Activated CD4-positive, alpha-beta T cell treated with anti-CD3 and anti-CD28 coated beads for 36 hours (primary cell): ENCODE measurements at regions of chr1 and their contacts with region 1.

Region 1: GRCh38 chr1:84156210-84156621 is 12.1 kb downstream of the PRKACB start:
- DNase-seq: peak; percentile 7
- ATAC-seq: peak; percentile 49
- H3K4me3 Mint-ChIP-seq: peak overlapping the region; percentile 38
- H3K27ac Mint-ChIP-seq: peak overlapping the region; percentile 65
- H3K4me1 Mint-ChIP-seq: peaks cover 87% of the 10 kb centered on the region
- H3K27me3 Mint-ChIP-seq: no peaks in the 10 kb centered on the region

Region 2: GRCh38 chr1:84090447-84091245 is 65.6 kb before region 1 on chr1:
- CTCF ChIA-PET with region 1: no interaction called
- POLR2A ChIA-PET with region 1: no interaction called
- intact Hi-C with region 1: loop called in 1 of 2 experiments (anchors 5 kb)
- DNase-seq: peak; percentile 10
- ATAC-seq: peak; percentile 52
- H3K4me3 Mint-ChIP-seq: peak overlapping the region; percentile 50
- H3K27ac Mint-ChIP-seq: peak overlapping the region; percentile 75
- H3K4me1 Mint-ChIP-seq: peaks cover 32% of the 10 kb centered on the region
- H3K27me3 Mint-ChIP-seq: no peaks in the 10 kb centered on the region

Region 3: DNA sequence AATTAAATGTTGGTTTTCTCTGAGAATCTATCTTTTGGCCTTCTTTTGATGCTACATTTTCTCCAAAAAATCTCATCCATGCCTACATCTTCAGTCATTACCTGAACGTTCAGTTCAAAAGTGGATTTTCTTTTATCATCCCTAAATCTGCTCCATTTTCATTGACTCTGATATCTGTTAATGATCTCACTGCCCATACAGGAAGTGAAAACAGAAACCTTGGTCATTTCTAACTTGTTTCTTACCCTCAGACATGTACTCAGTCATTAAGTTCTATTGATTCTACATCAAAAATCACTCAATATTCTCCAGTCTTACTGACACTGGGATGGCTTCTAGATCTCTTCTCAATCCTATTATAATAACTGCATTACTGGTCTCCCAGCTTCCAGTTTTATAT is 10.6 kb after region 1 on chr1:
- CTCF ChIA-PET with region 1: interaction called, 8 read pairs
- POLR2A ChIA-PET with region 1: interaction called, 3 read pairs
- intact Hi-C with region 1: loop called (anchors 1 to 2 kb)
- DNase-seq: no peak
- ATAC-seq: peak; percentile 71
- H3K4me3 Mint-ChIP-seq: peak overlapping the region; percentile 4
- H3K27ac Mint-ChIP-seq: peak overlapping the region; percentile 52
- H3K4me1 Mint-ChIP-seq: peaks cover 83% of the 10 kb centered on the region
- H3K27me3 Mint-ChIP-seq: no peaks in the 10 kb centered on the region

Region 4: DNA sequence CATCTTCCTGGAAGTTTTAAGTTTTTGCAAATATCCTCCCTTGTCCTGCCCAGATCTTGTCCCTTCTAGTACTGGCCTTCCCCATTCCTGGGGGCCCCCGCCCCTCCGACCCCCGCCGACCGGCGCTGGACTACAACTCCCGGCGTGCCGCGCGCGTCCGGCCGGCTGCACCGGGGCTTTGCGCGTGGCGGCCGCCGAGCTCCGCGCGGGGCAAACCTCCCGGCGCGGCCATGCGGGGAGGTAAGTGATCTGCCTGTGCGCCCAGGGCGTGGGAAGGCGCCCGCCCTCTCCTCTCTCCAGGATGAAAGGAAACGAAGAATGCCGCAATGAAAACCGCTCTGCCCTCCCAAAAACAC is 142.1 kb after region 1 on chr1:
- CTCF ChIA-PET with region 1: interaction called, 6 read pairs
- POLR2A ChIA-PET with region 1: no interaction called
- intact Hi-C with region 1: loop called in 1 of 2 experiments (anchors 5 kb)
- DNase-seq: peak; percentile 71
- ATAC-seq: peak; percentile 79
- H3K4me3 Mint-ChIP-seq: peak overlapping the region; percentile 78
- H3K27ac Mint-ChIP-seq: peak overlapping the region; percentile 71
- H3K4me1 Mint-ChIP-seq: peaks cover 34% of the 10 kb centered on the region
- H3K27me3 Mint-ChIP-seq: peaks cover 6% of the 10 kb centered on the region

Region 5: GRCh38 chr1:84853741-84854721 is 697.8 kb after region 1 on chr1:
- CTCF ChIA-PET with region 1: no interaction called
- POLR2A ChIA-PET with region 1: interaction called, 3 read pairs
- intact Hi-C with region 1: loop called in 1 of 2 experiments (anchors 5 kb)
- DNase-seq: peak; percentile 49
- ATAC-seq: peak; percentile 100
- H3K4me3 Mint-ChIP-seq: no peak overlapping the region
- H3K27ac Mint-ChIP-seq: peak overlapping the region; percentile 77
- H3K4me1 Mint-ChIP-seq: peaks cover 33% of the 10 kb centered on the region
- H3K27me3 Mint-ChIP-seq: no peaks in the 10 kb centered on the region